Activated CD8-positive, alpha-beta T cell treated with anti-CD3 and anti-CD28 coated beads for 36 hours (primary cell): ENCODE measurements at regions of chr3 and their contacts with region 1.

Region 1: DNA sequence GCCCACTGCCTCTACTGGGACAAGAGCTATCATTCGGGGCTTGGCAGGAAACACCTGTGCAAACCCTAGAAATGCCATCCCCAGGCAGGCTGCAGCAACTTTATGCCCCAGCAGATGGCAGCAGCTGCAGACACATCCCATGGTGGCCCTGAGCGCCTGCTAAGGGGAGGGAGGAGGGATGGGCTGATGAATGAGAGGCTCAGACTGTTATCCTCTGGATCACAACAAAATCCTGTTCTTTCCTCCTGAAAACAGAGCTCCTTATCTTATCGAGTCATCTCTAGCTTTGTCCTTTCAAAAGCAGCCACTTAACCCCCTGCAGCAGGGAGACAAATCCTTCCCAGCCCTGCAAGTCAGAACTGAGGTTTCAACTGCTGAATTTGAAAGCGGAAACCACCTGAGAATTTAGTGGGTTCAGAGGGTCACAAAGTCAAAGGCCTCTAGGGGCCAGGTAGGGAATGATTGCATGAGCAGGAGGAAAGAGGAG is 90.6 kb upstream of the PROK2 start:
- DNase-seq: peak; percentile 89
- ATAC-seq: peak; percentile 97
- H3K4me3 Mint-ChIP-seq: no peak overlapping the region
- H3K27ac Mint-ChIP-seq: peak overlapping the region; percentile 73
- H3K4me1 Mint-ChIP-seq: peaks cover 28% of the 10 kb centered on the region
- H3K27me3 Mint-ChIP-seq: peaks cover 4% of the 10 kb centered on the region
- CTCF ChIP-seq: peak; percentile 83

Region 2: GRCh38 chr3:71859123-71859519 is 16.4 kb before region 1 on chr3:
- CTCF ChIA-PET with region 1: interaction called, 16 read pairs
- POLR2A ChIA-PET with region 1: no interaction called
- intact Hi-C with region 1: no loop called
- DNase-seq: peak; percentile 12
- ATAC-seq: peak; percentile 70
- H3K4me3 Mint-ChIP-seq: no peak overlapping the region
- H3K27ac Mint-ChIP-seq: no peak overlapping the region
- H3K4me1 Mint-ChIP-seq: peaks cover 4% of the 10 kb centered on the region
- H3K27me3 Mint-ChIP-seq: peaks cover 17% of the 10 kb centered on the region
- CTCF ChIP-seq: peak; percentile 57

Region 3: DNA sequence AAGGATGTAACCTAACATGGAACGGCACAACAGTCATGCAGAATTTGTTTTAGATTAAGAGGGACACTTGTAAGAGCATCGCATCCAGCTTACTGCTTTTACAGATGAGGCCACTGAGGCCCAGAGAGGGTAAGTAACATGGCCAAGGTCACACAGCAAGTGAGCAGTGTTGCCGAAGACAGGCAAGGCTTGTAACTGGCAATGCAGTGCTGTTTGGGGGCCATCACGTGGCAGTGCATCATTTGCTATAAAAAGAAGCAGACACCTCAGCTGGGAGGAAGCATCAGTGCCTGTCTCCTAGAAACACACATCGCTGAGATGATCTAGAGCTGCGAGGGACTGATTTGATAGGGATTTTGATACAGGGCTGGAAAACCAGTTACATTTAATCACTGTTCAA is 17.6 kb after region 1 on chr3:
- CTCF ChIA-PET with region 1: interaction called, 42 read pairs
- POLR2A ChIA-PET with region 1: no interaction called
- intact Hi-C with region 1: no loop called
- DNase-seq: no peak
- ATAC-seq: no peak
- H3K4me3 Mint-ChIP-seq: no peak overlapping the region
- H3K27ac Mint-ChIP-seq: no peak overlapping the region
- H3K4me1 Mint-ChIP-seq: no peaks in the 10 kb centered on the region
- H3K27me3 Mint-ChIP-seq: peaks cover 4% of the 10 kb centered on the region
- CTCF ChIP-seq: no peak

Region 4: DNA sequence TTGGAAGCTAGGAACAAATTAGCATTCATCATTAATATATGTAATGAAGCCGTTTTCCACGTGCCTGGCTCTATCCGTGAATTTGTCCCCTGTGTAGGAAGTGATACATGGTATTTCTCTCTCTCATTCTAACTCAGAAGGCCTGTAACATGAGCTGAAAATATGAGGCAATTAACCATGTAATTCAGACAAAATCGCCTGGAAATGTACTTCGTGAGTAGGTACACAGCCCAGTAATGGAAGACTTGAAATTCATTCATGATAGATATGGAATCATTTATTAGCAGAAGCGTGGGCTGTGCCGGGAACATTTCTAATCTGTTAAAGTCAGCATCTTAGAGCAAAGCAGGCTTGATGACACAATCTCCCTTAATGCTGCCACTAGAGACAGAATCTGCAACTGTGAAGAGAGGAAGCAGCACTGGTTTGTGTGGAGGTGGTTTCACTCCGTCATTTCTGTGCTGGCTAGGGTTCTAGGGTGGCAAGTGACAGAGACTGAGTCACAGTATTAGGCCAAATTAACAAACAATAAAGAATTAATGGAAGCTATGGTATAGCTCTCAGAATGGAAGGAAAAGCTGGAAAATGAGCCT is 134.4 kb after region 1 on chr3:
- CTCF ChIA-PET with region 1: no interaction called
- POLR2A ChIA-PET with region 1: no interaction called
- intact Hi-C with region 1: no loop called
- DNase-seq: peak; percentile 16
- ATAC-seq: peak; percentile 49
- H3K4me3 Mint-ChIP-seq: no peak overlapping the region
- H3K27ac Mint-ChIP-seq: no peak overlapping the region
- H3K4me1 Mint-ChIP-seq: no peaks in the 10 kb centered on the region
- H3K27me3 Mint-ChIP-seq: peaks cover 9% of the 10 kb centered on the region
- CTCF ChIP-seq: no peak